ENCODE measurements at regions of chr17 and their contacts with region 1.

Region 1: DNA sequence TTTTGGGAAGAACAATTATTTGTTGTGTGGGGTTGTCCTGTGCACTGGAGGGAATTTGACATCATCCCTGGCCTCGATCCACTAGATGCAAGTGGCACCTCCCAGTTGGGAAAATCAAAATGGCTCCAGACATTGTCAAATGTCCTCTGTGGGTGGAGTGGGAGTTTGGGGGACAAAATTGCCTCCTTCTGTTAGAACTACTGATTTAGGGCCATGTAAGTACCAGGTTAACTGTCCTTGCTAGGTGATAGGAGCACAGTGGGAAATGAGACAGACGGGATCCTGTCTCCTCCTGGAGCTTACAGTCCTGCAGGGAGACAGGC is 56.8 kb downstream of the ARHGAP23 start:
- DNase-seq: no peak

Region 2: DNA sequence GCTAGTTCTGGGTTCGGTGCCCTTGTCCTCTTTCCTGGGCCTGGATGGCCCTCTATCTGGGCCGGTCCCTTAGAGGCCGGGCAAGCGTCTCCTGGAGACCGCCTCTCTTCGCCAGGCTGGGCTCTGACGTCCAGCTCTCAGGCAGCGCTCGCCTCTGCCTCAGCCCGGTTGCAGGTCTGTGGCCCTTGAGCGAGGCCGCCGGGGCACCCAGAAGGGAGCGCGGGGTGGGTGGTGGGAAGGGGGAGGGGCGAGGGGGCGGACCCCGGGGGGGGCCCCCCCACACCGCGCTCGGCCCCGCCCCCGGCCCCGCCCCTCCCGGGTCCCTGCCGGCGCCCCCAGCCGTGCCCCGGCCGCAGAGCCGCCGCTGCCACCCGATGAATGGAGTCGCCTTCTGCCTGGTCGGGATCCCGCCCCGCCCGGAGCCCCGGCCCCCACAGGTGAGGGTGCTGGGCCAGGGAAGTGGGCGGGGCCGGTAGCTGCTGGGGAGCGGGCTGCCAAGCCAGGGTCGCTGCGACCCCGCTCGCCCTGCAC is 56.9 kb before region 1 on chr17 and contains the start of gene ARHGAP23:
- intact Hi-C with region 1: loop called (anchors 5 kb)
- DNase-seq: peak; percentile 64 to 90 (median 78)

Region 3: DNA sequence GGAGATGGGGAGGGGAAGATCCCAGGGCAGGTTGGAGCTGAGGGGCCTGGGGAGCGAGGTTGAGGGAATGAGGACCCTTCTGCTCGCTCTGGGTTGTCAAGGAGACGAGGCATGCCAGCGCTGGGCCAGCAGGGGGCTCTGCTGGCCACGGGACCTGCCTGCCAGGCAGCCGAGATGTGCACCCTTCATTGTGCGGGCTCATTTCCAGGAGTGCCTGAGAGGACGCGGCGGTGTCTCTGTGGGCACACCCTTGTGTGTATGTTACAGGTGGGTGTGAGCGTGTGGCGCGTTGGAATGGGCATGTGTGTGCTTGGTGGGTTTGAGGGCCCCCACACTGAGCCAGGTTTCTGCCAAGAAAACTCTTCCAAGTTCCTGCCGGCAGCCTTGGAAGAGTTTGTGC is 41.0 kb before region 1 on chr17:
- intact Hi-C with region 1: loop called (anchors 5 kb)
- DNase-seq: peak; percentile 63 to 92 (median 81)

Measured in head of caudate nucleus (tissue), 42 donors.